ENCODE measurements at regions of chr6 and their contacts with region 1.

Region 1: DNA sequence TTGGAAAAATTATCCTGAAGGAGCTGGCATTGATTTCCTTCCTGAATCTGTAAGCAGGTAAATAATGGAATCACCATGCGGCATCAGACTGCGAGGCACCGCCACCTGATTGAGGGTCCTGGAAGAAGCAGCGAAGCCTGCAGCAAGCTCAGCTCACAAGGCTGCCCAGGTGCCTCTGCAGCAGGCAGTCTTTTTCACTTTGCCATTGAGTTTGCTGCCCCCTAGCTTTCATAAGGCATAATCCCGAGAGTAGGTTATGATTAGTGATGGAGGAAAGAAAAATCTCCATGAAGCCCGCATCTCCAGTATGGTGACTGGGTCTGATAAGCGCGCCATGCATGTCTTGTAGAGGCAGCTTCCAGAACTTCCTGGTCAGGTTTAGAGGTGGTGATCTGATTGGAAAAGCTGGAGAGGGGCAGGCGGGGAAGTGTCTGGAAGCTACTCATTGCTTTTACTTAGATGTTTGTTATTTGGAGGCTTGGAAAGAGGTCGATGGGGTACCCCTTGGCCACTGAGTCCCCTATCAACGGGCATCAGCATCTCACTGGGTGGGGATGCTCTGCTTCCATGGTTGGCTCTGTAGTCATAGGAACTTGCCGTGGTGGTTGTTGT is 26.7 kb downstream of the IYD start:
- DNase-seq: peak in 2 of 3 donors; percentile 39 to 72
- ATAC-seq: peak; percentile 85
- H3K4me3 ChIP-seq: no peak overlapping the region
- H3K4me1 ChIP-seq: no peaks in the 10 kb centered on the region
- CTCF ChIP-seq: peak; percentile 51

Region 2: GRCh38 chr6:150072201-150072600 is 323.3 kb before region 1 on chr6:
- intact Hi-C with region 1: loop called in 1 of 2 experiments (anchors 10 kb)
- DNase-seq: peak; percentile 91 to 95 (median 92)
- ATAC-seq: peak; percentile 89
- H3K4me3 ChIP-seq: no peak overlapping the region
- H3K4me1 ChIP-seq: peaks cover 17% of the 10 kb centered on the region
- CTCF ChIP-seq: no peak

Region 3: DNA sequence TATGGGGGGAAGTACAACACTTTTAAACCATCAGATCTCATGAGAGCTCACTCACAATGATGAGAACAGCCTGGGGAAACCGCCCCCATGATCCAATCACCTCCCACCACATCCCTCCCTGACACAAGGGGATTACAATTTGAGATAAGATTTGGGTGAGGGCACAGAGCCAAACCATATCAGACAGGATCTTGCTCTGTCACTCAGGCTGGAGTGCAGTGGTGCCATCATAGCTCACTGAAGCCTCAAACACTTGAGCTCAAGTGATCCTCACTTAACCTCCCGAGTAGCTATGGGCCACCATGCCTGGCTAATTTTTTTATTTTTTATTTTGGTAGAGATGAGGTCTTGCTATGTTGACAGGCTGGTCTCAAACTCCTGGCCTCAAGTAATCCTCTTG is 31.8 kb before region 1 on chr6:
- intact Hi-C with region 1: no loop called
- DNase-seq: no peak
- ATAC-seq: no peak
- H3K4me3 ChIP-seq: no peak overlapping the region
- H3K4me1 ChIP-seq: peaks cover 5% of the 10 kb centered on the region
- CTCF ChIP-seq: no peak

Region 4: DNA sequence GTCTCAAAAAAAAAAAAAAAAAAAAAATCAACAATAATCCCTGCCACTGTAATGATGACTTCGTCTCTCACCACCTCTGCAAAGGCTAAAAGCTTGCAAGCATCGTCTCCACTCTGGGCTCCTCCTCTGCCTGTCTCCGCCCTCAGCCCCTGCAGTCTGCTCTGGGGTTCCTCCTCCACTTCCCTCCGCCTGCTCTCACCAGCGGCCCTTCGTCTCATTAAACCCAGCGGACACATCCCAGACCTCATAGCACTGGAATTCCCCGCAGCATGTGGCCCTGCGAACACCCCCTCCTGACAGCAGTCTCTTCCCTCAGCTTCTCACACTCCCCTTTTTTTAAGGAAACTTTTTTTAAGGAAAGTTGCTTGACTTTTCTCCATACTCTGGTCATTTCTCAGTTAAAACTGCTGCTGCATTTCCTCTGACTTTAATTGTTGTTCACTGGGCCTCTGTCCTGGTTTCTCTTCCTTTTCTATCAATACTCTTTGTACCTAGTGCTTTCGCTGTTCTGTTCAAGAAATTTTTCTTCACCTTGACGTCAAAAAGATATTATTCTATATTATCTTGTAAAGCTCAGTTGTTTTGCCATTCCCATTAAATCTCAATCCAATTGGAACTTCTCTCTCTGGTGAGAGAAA is 133.3 kb after region 1 on chr6:
- intact Hi-C with region 1: no loop called
- DNase-seq: peak; percentile 23 to 63 (median 39)
- ATAC-seq: peak; percentile 59
- H3K4me3 ChIP-seq: no peak overlapping the region
- H3K4me1 ChIP-seq: peaks cover 4% of the 10 kb centered on the region
- CTCF ChIP-seq: no peak

Measured in mucosa of descending colon (tissue), 3 donors.